CD4-positive, alpha-beta memory T cell (primary cell): ENCODE measurements at regions of chr16 and their contacts with region 1.

Region 1: GRCh38 chr16:58629572-58630104 is at the start of gene CNOT1:
- DNase-seq: peak; percentile 99
- H3K4me3 ChIP-seq: peak within 1 kb of the TSS; percentile 89 to 99
- H3K4me3 Mint-ChIP-seq: peak within 1 kb of the TSS; percentile 97 to 100 (median 100)
- H3K27ac ChIP-seq: peak within 1 kb of the TSS; percentile 100
- H3K27ac Mint-ChIP-seq: peak within 1 kb of the TSS; percentile 99 to 100 (median 100)
- H3K4me1 ChIP-seq: peaks cover 33% of the 10 kb centered on the region
- H3K4me1 Mint-ChIP-seq: peaks cover 14 to 46% (median 29%) of the 10 kb centered on the region in 4 donors
- H3K27me3 ChIP-seq: no peaks in the 10 kb centered on the region
- H3K27me3 Mint-ChIP-seq: no peaks in the 10 kb centered on the region
- total RNA-seq, gene CNOT1: 251 to 262 TPM

Region 2: DNA sequence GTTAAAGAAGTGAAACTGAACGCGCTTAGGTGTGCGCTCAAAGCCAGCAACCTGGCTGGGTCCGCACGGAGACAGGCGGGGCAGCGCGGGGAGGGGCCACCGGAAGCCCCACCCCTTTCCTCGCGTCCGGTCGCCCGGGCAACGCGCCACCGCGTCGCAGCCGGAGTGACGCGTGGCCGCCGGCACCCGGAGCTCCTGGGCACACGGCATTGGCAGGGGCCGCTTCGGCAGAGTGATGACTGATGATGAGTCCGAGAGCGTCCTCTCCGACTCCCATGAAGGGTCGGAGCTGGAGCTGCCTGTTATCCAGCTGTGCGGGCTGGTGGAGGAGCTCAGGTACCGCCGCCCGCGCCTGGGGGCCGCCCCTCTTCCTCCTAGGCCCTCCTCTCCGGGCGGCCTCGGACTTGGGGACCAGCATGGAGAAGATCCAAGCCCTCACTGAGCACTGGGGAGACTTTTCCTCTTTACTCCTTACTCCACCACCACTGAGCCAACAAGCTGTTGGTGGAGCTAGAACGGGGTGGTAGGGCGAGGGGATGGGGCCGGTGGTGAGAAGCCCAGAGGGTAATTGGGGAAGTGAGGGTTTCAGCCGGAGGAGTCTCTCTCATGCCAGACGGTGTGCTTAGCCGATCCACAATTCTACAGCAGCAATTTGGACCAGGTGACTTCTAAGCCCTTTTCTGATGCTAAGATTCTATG is 379.7 kb before region 1 on chr16:
- CTCF ChIA-PET with region 1: no interaction called
- POLR2A ChIA-PET with region 1: no interaction called
- intact Hi-C with region 1: loop called (anchors 5 kb)
- DNase-seq: peak; percentile 78 to 89 (median 87)
- H3K4me3 ChIP-seq: peak overlapping the region; percentile 55 to 58
- H3K4me3 Mint-ChIP-seq: peak overlapping the region; percentile 80 to 93 (median 85)
- H3K27ac ChIP-seq: no peak overlapping the region
- H3K27ac Mint-ChIP-seq: peak overlapping the region; percentile 64 to 91 (median 86)
- H3K4me1 ChIP-seq: peaks cover 12% of the 10 kb centered on the region
- H3K4me1 Mint-ChIP-seq: peaks cover 6 to 14% (median 10%) of the 10 kb centered on the region in 4 donors
- H3K27me3 ChIP-seq: no peaks in the 10 kb centered on the region
- H3K27me3 Mint-ChIP-seq: peaks cover 1 to 4% of the 10 kb centered on the region in 2 donors

Region 3: GRCh38 chr16:58515125-58515870 is 114.3 kb before region 1 on chr16 and contains the start of gene SETD6:
- CTCF ChIA-PET with region 1: interaction called, 4 read pairs
- POLR2A ChIA-PET with region 1: interaction called, 6 read pairs
- intact Hi-C with region 1: loop called (anchors 1 kb)
- DNase-seq: peak; percentile 54 to 69 (median 66)
- H3K4me3 ChIP-seq: peak within 1 kb of the TSS; percentile 42 to 89
- H3K4me3 Mint-ChIP-seq: peak within 1 kb of the TSS; percentile 85 to 92 (median 90)
- H3K27ac ChIP-seq: peak within 1 kb of the TSS; percentile 63
- H3K27ac Mint-ChIP-seq: peak within 1 kb of the TSS; percentile 79 to 94 (median 90)
- H3K4me1 ChIP-seq: peaks cover 12% of the 10 kb centered on the region
- H3K4me1 Mint-ChIP-seq: peaks cover 10 to 34% (median 20%) of the 10 kb centered on the region in 4 donors
- H3K27me3 ChIP-seq: no peaks in the 10 kb centered on the region
- H3K27me3 Mint-ChIP-seq: no peaks in the 10 kb centered on the region
- total RNA-seq, gene SETD6: 34.2 to 38.3 TPM

Region 4: GRCh38 chr16:58589326-58589905 is 40.2 kb before region 1 on chr16:
- CTCF ChIA-PET with region 1: no interaction called
- POLR2A ChIA-PET with region 1: no interaction called
- intact Hi-C with region 1: loop called (anchors 5 kb)
- DNase-seq: no peak
- H3K4me3 ChIP-seq: no peak overlapping the region
- H3K4me3 Mint-ChIP-seq: no peak overlapping the region
- H3K27ac ChIP-seq: no peak overlapping the region
- H3K27ac Mint-ChIP-seq: peak overlapping the region in 4 of 7 donors; percentile 33 to 75 (median 55)
- H3K4me1 ChIP-seq: no peaks in the 10 kb centered on the region
- H3K4me1 Mint-ChIP-seq: peaks cover 0 to 22% (median 12%) of the 10 kb centered on the region in 4 donors
- H3K27me3 ChIP-seq: no peaks in the 10 kb centered on the region
- H3K27me3 Mint-ChIP-seq: no peaks in the 10 kb centered on the region

Region 5: GRCh38 chr16:58733671-58734458 is 104.2 kb after region 1 on chr16 and contains the start of gene GOT2:
- CTCF ChIA-PET with region 1: no interaction called
- POLR2A ChIA-PET with region 1: no interaction called
- intact Hi-C with region 1: loop called (anchors 1 kb)
- DNase-seq: peak; percentile 70 to 81 (median 77)
- H3K4me3 ChIP-seq: peak within 1 kb of the TSS; percentile 85 to 86
- H3K4me3 Mint-ChIP-seq: peak within 1 kb of the TSS; percentile 94 to 99 (median 98)
- H3K27ac ChIP-seq: peak within 1 kb of the TSS; percentile 72
- H3K27ac Mint-ChIP-seq: peak within 1 kb of the TSS; percentile 57 to 97 (median 94)
- H3K4me1 ChIP-seq: peaks cover 37% of the 10 kb centered on the region
- H3K4me1 Mint-ChIP-seq: peaks cover 24 to 45% (median 35%) of the 10 kb centered on the region in 4 donors
- H3K27me3 ChIP-seq: no peaks in the 10 kb centered on the region
- H3K27me3 Mint-ChIP-seq: no peaks in the 10 kb centered on the region
- total RNA-seq, gene GOT2: 37.1 to 42.4 TPM

Region 6: DNA sequence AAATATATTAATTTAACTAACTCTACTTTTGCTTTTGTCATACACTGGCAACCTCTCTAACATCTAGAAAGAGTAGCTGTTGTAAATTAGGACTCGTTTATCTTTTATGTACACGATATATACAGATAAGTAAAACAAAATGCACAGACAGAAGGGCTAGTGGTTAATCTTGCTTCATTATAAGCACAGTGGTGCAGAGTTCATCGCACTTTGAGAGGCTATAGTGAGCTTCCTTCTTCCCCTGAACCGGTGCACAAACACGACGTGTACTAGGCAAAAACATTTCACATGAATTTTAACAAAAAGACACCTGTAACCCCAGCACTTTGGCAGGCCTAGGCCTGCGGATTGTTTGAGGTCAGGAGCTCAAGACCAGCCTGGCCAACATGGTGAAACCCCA is 114.9 kb after region 1 on chr16:
- CTCF ChIA-PET with region 1: no interaction called
- POLR2A ChIA-PET with region 1: no interaction called
- intact Hi-C with region 1: no loop called
- DNase-seq: no peak
- H3K4me3 ChIP-seq: no peak overlapping the region
- H3K4me3 Mint-ChIP-seq: no peak overlapping the region
- H3K27ac ChIP-seq: no peak overlapping the region
- H3K27ac Mint-ChIP-seq: no peak overlapping the region
- H3K4me1 ChIP-seq: no peaks in the 10 kb centered on the region
- H3K4me1 Mint-ChIP-seq: no peaks in the 10 kb centered on the region
- H3K27me3 ChIP-seq: no peaks in the 10 kb centered on the region
- H3K27me3 Mint-ChIP-seq: no peaks in the 10 kb centered on the region